ENCODE measurements at regions of chr16 and their contacts with region 1.

Region 1: GRCh38 chr16:69112285-69113129 is 7.1 kb downstream of the HAS3 start:
- DNase-seq: peak; percentile 45 to 62
- ATAC-seq: peak in 6 of 8 donors; percentile 39 to 63 (median 50)
- H3K4me3 ChIP-seq: no peak overlapping the region
- H3K27ac ChIP-seq: no peak overlapping the region
- H3K4me1 ChIP-seq: peaks cover 9 to 50% (median 24%) of the 10 kb centered on the region in 9 donors
- H3K27me3 ChIP-seq: peaks cover 0 to 15% (median 0%) of the 10 kb centered on the region in 7 donors
- CTCF ChIP-seq: peak; percentile 23 to 78 (median 68)

Region 2: DNA sequence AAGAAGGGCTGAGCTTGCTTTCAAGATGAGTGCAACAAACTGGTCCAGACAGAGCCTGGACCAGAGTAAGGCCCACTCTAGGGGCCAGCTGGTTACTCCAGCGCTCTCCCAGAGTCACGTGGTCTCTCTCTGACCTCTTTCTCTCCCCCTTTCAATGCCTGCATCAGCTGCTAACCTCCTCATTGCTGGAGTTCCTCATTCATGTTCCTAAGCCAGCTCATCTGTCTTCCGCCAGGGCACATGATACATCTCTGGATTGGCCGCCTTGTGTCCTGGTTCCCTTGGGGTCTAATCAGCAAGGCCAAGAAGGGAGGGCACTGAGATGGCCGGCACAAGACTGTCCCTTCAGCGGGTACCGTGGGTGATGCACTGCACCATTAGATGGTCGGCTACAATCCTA is 600.3 kb before region 1 on chr16:
- intact Hi-C with region 1: loop called in 1 of 10 experiments (anchors 5 kb)
- DNase-seq: no peak
- ATAC-seq: no peak
- H3K4me3 ChIP-seq: no peak overlapping the region
- H3K27ac ChIP-seq: no peak overlapping the region
- H3K4me1 ChIP-seq: peaks cover 0 to 9% (median 8%) of the 10 kb centered on the region in 9 donors
- H3K27me3 ChIP-seq: peaks cover 0 to 22% (median 0%) of the 10 kb centered on the region in 7 donors
- CTCF ChIP-seq: no peak

Region 3: GRCh38 chr16:68972720-68973119 is 139.8 kb before region 1 on chr16:
- intact Hi-C with region 1: no loop called
- DNase-seq: peak in 1 of 2 donors; percentile 8
- ATAC-seq: peak in 4 of 8 donors; percentile 29 to 41 (median 33)
- H3K4me3 ChIP-seq: no peak overlapping the region
- H3K27ac ChIP-seq: no peak overlapping the region
- H3K4me1 ChIP-seq: peaks cover 0 to 5% (median 0%) of the 10 kb centered on the region in 9 donors
- H3K27me3 ChIP-seq: no peaks in the 10 kb centered on the region
- CTCF ChIP-seq: peak in 4 of 9 donors; percentile 29 to 41 (median 34)

Region 4: GRCh38 chr16:68995011-68995504 is 117.4 kb before region 1 on chr16:
- intact Hi-C with region 1: loop called in 2 of 10 experiments (anchors 10 kb)
- DNase-seq: no peak
- ATAC-seq: peak in 1 of 8 donors; percentile 55
- H3K4me3 ChIP-seq: no peak overlapping the region
- H3K27ac ChIP-seq: no peak overlapping the region
- H3K4me1 ChIP-seq: peaks cover 0 to 12% (median 0%) of the 10 kb centered on the region in 9 donors
- H3K27me3 ChIP-seq: no peaks in the 10 kb centered on the region
- CTCF ChIP-seq: peak in 7 of 9 donors; percentile 15 to 38 (median 32)